Activated naive CD4-positive, alpha-beta T cell treated with anti-CD3 and anti-CD28 coated beads for 36 hours (primary cell): ENCODE measurements at regions of chr2 and their contacts with region 1.

Region 1: GRCh38 chr2:164055623-164056022 is 319.8 kb upstream of the FIGN start:
- DNase-seq: no peak
- H3K4me3 Mint-ChIP-seq: no peak overlapping the region
- H3K27ac Mint-ChIP-seq: no peak overlapping the region
- H3K4me1 Mint-ChIP-seq: no peaks in the 10 kb centered on the region
- H3K27me3 Mint-ChIP-seq: no peaks in the 10 kb centered on the region

Region 2: DNA sequence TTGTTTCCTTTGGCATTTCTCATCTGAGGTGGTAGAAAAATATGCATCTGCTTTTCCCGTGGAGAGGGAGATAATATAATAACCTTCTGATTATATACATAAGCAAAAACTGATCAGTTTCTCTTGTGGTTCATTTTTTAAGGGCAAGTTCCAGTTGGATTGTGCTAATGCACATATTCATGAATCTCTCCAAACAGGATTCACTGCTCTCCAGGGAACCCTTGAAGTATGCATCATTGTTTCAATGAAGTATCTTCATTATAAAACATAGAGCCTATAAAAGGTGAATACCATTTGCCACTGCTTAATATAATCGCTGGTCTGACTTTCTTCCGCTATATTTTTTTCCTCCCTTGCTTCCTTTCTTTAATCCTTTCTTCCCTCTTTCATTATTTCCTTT is 704.5 kb before region 1 on chr2:
- CTCF ChIA-PET with region 1: no interaction called
- intact Hi-C with region 1: loop called (anchors 2 kb)
- DNase-seq: no peak
- H3K4me3 Mint-ChIP-seq: no peak overlapping the region
- H3K27ac Mint-ChIP-seq: no peak overlapping the region
- H3K4me1 Mint-ChIP-seq: no peaks in the 10 kb centered on the region
- H3K27me3 Mint-ChIP-seq: peaks cover 3% of the 10 kb centered on the region

Region 3: GRCh38 chr2:163887182-163887581 is 168.4 kb before region 1 on chr2:
- CTCF ChIA-PET with region 1: no interaction called
- intact Hi-C with region 1: no loop called
- DNase-seq: no peak
- H3K4me3 Mint-ChIP-seq: no peak overlapping the region
- H3K27ac Mint-ChIP-seq: no peak overlapping the region
- H3K4me1 Mint-ChIP-seq: no peaks in the 10 kb centered on the region
- H3K27me3 Mint-ChIP-seq: no peaks in the 10 kb centered on the region